CD14-positive monocyte (primary cell): ENCODE measurements at regions of chr2 and their contacts with region 1.

Region 1: DNA sequence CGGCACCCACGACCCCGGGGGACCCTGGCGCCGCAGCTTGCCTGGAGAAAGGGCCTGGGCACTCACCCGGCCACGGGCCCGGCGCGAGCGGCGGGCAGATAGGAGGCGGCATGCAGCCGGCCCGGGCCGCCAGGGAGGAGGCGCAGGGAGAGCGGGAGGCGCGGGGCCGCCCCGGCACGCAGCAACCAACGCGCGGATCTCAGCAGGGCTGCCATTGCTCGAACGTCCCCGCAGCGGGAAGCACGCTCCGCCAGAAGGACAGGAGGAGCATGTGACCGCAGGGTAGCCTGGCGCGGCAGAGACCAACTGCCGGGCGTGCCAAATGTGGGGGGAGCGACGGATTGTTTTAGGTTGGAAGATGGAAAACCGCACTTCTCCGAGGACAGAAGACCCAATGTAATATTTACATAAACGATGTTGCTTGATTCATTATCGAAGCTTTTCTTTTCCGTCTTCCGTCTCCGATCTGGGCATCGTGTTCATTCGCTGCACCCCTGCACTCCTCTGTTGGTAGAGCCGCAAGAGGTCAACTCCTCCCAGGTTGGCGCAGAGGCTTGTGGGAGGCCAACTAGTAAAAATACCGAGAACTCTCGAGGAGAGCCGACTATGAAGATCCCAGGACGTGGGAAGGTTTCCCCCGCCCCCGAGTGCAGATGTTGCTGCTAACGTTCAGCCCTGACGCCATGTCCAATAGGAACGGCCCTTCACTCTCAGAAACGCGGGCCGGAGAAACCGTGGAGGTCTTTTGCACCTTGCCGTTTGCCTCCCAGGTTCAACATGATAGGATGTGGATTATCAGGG is at the start of gene LRPPRC:
- DNase-seq: peak; percentile 87 to 90 (median 87)
- H3K4me3 ChIP-seq: peak within 1 kb of the TSS; percentile 63 to 90 (median 81)
- H3K4me3 Mint-ChIP-seq: peak within 1 kb of the TSS; percentile 91 to 96
- H3K27ac ChIP-seq: peak within 1 kb of the TSS; percentile 63 to 90
- H3K27ac Mint-ChIP-seq: peak within 1 kb of the TSS; percentile 97 to 99 (median 99)
- H3K4me1 ChIP-seq: peaks cover 10 to 21% of the 10 kb centered on the region in 2 donors
- H3K4me1 Mint-ChIP-seq: peaks cover 25% of the 10 kb centered on the region
- H3K27me3 ChIP-seq: no peaks in the 10 kb centered on the region
- H3K27me3 Mint-ChIP-seq: peaks cover 1 to 6% (median 6%) of the 10 kb centered on the region in 3 donors
- CTCF ChIP-seq: no peak
- polyA plus RNA-seq, gene LRPPRC: 15.5 to 25.0 (median 24.8) TPM

Region 2: GRCh38 chr2:43595603-43596412 is 400.1 kb before region 1 on chr2 and contains the start of gene THADA:
- intact Hi-C with region 1: loop called in 1 of 2 experiments (anchors 10 kb)
- DNase-seq: peak; percentile 98 to 99 (median 98)
- H3K4me3 ChIP-seq: peak within 1 kb of the TSS; percentile 78 to 98 (median 91)
- H3K4me3 Mint-ChIP-seq: peak within 1 kb of the TSS; percentile 92 to 95
- H3K27ac ChIP-seq: peak within 1 kb of the TSS; percentile 78 to 96
- H3K27ac Mint-ChIP-seq: peak within 1 kb of the TSS; percentile 93 to 98 (median 97)
- H3K4me1 ChIP-seq: peaks cover 16 to 22% of the 10 kb centered on the region in 2 donors
- H3K4me1 Mint-ChIP-seq: peaks cover 21% of the 10 kb centered on the region
- H3K27me3 ChIP-seq: no peaks in the 10 kb centered on the region
- H3K27me3 Mint-ChIP-seq: peaks cover 2 to 8% (median 3%) of the 10 kb centered on the region in 3 donors
- CTCF ChIP-seq: no peak
- polyA plus RNA-seq, gene THADA: 7.3 to 11.2 (median 9.7) TPM

Region 3: GRCh38 chr2:43773876-43774613 is 221.9 kb before region 1 on chr2 and contains the start of gene DYNC2LI1:
- intact Hi-C with region 1: loop called in 1 of 2 experiments (anchors 10 kb)
- DNase-seq: peak; percentile 81 to 83 (median 81)
- H3K4me3 ChIP-seq: peak within 1 kb of the TSS; percentile 69 to 89 (median 76)
- H3K4me3 Mint-ChIP-seq: peak within 1 kb of the TSS; percentile 97 to 98
- H3K27ac ChIP-seq: peak within 1 kb of the TSS in 1 of 2 donors; percentile 73
- H3K27ac Mint-ChIP-seq: peak within 1 kb of the TSS; percentile 84 to 98 (median 93)
- H3K4me1 ChIP-seq: peaks cover 7 to 10% of the 10 kb centered on the region in 2 donors
- H3K4me1 Mint-ChIP-seq: peaks cover 10% of the 10 kb centered on the region
- H3K27me3 ChIP-seq: no peaks in the 10 kb centered on the region
- H3K27me3 Mint-ChIP-seq: peaks cover 0 to 3% (median 0%) of the 10 kb centered on the region in 3 donors
- CTCF ChIP-seq: no peak
- polyA plus RNA-seq, gene DYNC2LI1: 2.5 to 4.4 (median 3.5) TPM

Region 4: DNA sequence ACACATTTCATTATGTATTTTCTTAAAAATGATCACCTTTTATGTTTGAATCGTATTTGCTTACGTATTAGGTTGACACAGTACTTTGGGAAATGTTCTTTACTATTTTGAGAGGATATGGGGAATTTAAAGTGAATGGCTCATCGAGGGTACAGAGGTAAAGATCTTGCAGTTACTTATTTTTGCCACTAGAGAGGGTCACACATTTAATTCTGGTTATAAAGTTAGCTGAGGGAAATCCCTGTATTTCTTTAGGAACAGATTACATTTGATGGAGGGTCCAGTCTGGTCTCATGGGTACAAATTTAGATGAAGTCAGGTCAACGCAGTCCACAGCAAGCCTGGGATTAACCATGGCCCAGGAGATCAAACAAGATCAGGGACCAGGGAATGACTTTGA is 197.6 kb before region 1 on chr2:
- intact Hi-C with region 1: no loop called
- DNase-seq: no peak
- H3K4me3 ChIP-seq: no peak overlapping the region
- H3K4me3 Mint-ChIP-seq: no peak overlapping the region
- H3K27ac ChIP-seq: no peak overlapping the region
- H3K27ac Mint-ChIP-seq: no peak overlapping the region
- H3K4me1 ChIP-seq: no peaks in the 10 kb centered on the region
- H3K4me1 Mint-ChIP-seq: peaks cover 3% of the 10 kb centered on the region
- H3K27me3 ChIP-seq: no peaks in the 10 kb centered on the region
- H3K27me3 Mint-ChIP-seq: no peaks in the 10 kb centered on the region
- CTCF ChIP-seq: peak; percentile 33

Region 5: DNA sequence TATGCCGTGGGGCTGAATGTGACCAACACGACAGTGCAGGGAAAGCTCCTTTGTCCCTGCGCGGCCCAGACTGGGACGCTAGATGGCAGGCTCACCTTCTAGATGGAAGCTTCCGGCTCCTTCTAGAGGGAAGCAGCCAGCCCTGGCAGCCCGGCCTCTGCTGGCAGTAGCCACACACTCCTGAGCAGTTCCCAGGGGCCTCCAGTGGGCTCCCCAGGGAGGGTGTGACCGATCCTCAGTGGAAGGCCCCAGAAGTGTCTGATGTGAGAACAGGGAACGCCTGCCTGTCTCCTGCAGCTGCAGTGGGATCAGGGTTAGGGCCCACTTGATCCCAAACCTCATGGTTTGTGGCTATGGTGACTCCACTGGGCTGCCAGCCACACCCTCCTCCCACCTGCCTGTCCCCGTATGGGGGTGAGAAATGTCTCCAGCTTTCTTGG is 48.4 kb after region 1 on chr2:
- intact Hi-C with region 1: no loop called
- DNase-seq: peak; percentile 54 to 74 (median 69)
- H3K4me3 ChIP-seq: no peak overlapping the region
- H3K4me3 Mint-ChIP-seq: no peak overlapping the region
- H3K27ac ChIP-seq: no peak overlapping the region
- H3K27ac Mint-ChIP-seq: no peak overlapping the region
- H3K4me1 ChIP-seq: no peaks in the 10 kb centered on the region
- H3K4me1 Mint-ChIP-seq: peaks cover 2% of the 10 kb centered on the region
- H3K27me3 ChIP-seq: no peaks in the 10 kb centered on the region
- H3K27me3 Mint-ChIP-seq: peaks cover 7 to 11% (median 9%) of the 10 kb centered on the region in 3 donors
- CTCF ChIP-seq: peak; percentile 83

Region 6: DNA sequence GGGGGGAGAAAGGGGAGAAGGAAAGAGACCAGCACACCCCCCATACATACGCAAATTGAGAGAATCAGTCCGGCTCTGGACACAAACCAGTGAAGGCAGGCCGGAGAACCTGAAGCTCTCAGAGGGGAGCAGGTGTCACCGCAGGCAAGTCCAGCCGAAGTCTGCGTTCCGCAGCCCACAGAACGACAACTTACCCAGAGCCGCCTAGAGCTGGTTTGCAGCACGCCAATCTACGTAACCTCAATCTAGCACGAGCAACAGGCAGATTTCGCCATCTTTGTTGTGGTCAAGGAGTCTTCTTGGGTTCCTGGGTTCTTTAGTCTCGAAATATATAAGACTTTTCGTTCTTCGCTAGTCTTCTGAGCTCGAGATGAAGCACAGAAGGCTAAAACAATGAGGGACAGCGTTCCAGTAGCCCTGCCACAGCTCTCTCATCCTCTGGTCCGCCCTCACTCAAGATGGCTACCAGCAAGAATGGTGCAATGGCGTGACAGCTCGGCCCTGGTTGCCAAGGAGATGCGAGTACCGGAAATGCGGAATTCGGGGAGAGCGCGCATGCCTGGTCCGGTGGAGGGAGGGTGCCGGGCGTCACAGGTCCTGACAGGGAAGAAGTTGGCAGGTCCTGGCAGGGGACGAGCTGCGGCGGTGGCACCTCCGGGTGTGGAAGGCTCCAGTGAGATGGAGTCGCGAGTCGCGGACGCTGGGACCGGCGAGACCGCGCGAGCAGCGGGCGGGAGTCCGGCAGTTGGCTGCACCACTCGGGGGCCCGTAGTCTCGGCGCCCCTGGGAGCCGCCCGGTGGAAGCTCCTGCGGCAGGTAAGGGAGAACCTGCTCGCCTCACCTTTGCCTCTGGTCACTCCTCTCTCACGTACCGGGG is 365.6 kb after region 1 on chr2 and contains the starts of genes CAMKMT and PREPL:
- intact Hi-C with region 1: loop called (anchors 2 to 10 kb)
- DNase-seq: peak; percentile 95 to 98 (median 97)
- H3K4me3 ChIP-seq: peak within 1 kb of the TSS; percentile 89 to 94 (median 93)
- H3K4me3 Mint-ChIP-seq: peak within 1 kb of the TSS; percentile 100
- H3K27ac ChIP-seq: peak within 1 kb of the TSS; percentile 77 to 100
- H3K27ac Mint-ChIP-seq: peak within 1 kb of the TSS; percentile 99 to 100 (median 99)
- H3K4me1 ChIP-seq: peaks cover 15 to 16% of the 10 kb centered on the region in 2 donors
- H3K4me1 Mint-ChIP-seq: peaks cover 22% of the 10 kb centered on the region
- H3K27me3 ChIP-seq: no peaks in the 10 kb centered on the region
- H3K27me3 Mint-ChIP-seq: peaks cover 0 to 2% (median 0%) of the 10 kb centered on the region in 3 donors
- CTCF ChIP-seq: no peak
- polyA plus RNA-seq, gene CAMKMT: 4.7 to 7.8 (median 7.0) TPM
- polyA plus RNA-seq, gene PREPL: 2.6 to 10.8 (median 8.0) TPM

Region 7: GRCh38 chr2:45611020-45611737 is 1615.2 kb after region 1 on chr2 and contains the start of gene SRBD1:
- intact Hi-C with region 1: loop called in 1 of 2 experiments (anchors 10 kb)
- DNase-seq: peak; percentile 75 to 91 (median 89)
- H3K4me3 ChIP-seq: peak within 1 kb of the TSS; percentile 67 to 97 (median 93)
- H3K4me3 Mint-ChIP-seq: peak within 1 kb of the TSS; percentile 96 to 99
- H3K27ac ChIP-seq: peak within 1 kb of the TSS; percentile 67 to 79
- H3K27ac Mint-ChIP-seq: peak within 1 kb of the TSS; percentile 90 to 96 (median 94)
- H3K4me1 ChIP-seq: peaks cover 12 to 17% of the 10 kb centered on the region in 2 donors
- H3K4me1 Mint-ChIP-seq: peaks cover 23% of the 10 kb centered on the region
- H3K27me3 ChIP-seq: no peaks in the 10 kb centered on the region
- H3K27me3 Mint-ChIP-seq: no peaks in the 10 kb centered on the region
- CTCF ChIP-seq: no peak
- polyA plus RNA-seq, gene SRBD1: 5.8 to 9.2 (median 7.0) TPM